Left colon (tissue), 2 donors: ENCODE measurements at regions of chr2 and their contacts with region 1.

Region 1: GRCh38 chr2:206783718-206784117 is 18.3 kb downstream of the FASTKD2 start:
- DNase-seq: no peak
- ATAC-seq: no peak

Region 2: DNA sequence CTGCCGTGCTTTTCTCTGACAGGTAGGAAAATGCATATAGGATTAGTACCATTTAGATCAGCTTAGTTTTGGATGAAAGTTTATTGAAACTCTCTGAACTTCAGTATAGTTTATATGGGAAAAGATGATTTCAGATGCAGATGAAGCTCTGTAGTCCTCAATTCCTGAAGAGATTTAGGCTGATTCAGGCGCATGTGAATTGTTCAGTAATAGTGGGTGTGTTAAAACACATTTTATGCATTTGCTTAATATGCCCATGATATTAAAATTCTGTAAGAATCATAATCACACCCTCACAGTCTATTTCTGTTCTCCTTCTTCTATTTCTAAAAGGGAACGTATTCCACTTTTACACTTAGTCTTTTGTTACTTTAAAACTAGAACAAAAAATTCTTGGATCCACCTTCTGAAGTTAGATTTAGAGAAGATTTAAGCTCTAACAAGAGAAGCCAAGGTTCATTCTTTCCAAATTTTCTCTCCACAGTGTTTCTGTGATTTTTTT is 185.9 kb before region 1 on chr2:
- intact Hi-C with region 1: no loop called
- DNase-seq: no peak
- ATAC-seq: no peak

Region 3: DNA sequence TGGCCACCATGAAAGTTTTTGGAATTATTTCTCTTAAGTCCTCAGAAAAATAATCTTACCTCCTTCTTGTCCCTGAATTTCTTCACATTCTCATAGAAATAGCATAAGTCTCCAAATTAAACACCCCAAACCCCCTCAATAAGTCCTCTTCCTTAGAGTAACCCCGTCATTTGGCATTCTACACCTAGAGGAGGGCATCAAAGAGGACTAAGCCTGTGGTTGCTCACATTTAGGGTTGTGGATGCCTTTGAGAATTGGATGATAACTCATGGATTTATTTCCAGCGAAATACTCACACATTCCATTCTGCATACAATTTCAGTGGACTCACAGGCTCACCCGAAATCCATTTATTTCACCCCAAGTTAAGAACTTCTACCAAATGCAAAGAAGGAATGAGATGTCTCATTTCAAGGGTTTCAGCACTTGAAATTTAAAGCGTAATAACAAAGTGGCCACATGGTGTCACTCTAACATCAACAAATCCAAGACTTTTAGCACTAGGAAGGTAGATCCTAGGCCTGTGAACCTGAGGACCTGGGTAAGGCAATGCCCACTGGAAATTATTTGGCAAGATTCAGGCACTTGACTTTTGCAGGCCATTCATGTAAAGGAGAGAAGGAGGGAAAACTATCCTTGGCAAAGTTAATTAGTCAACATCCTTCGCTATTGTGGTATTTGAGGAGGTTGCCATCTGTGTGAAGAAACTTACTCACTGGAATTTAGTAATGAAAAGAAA is 90.2 kb before region 1 on chr2:
- intact Hi-C with region 1: loop called in 1 of 2 experiments (anchors 10 kb)
- DNase-seq: peak in 1 of 2 donors; percentile 8
- ATAC-seq: peak; percentile 78

Region 4: GRCh38 chr2:206832873-206833272 is 49.2 kb after region 1 on chr2:
- intact Hi-C with region 1: no loop called
- DNase-seq: no peak
- ATAC-seq: no peak